ENCODE measurements at regions of chr15 and their contacts with region 1.

Region 1: GRCh38 chr15:26201177-26201858 is 338.2 kb upstream of the ATP10A start:
- DNase-seq: no peak
- H3K4me3 ChIP-seq: no peak overlapping the region
- H3K27ac ChIP-seq: no peak overlapping the region
- H3K4me1 ChIP-seq: no peaks in the 10 kb centered on the region
- H3K27me3 ChIP-seq: no peaks in the 10 kb centered on the region
- CTCF ChIP-seq: no peak
- POLR2A ChIP-seq: no peak

Region 2: GRCh38 chr15:25971053-25971452 is 230.3 kb before region 1 on chr15:
- intact Hi-C with region 1: loop called (anchors 10 kb)
- DNase-seq: no peak
- H3K4me3 ChIP-seq: no peak overlapping the region
- H3K27ac ChIP-seq: no peak overlapping the region
- H3K4me1 ChIP-seq: no peaks in the 10 kb centered on the region
- H3K27me3 ChIP-seq: no peaks in the 10 kb centered on the region
- CTCF ChIP-seq: no peak
- POLR2A ChIP-seq: no peak

Region 3: GRCh38 chr15:26087395-26087794 is 113.9 kb before region 1 on chr15:
- intact Hi-C with region 1: no loop called
- DNase-seq: no peak
- H3K4me3 ChIP-seq: no peak overlapping the region
- H3K27ac ChIP-seq: no peak overlapping the region
- H3K4me1 ChIP-seq: no peaks in the 10 kb centered on the region
- H3K27me3 ChIP-seq: no peaks in the 10 kb centered on the region
- CTCF ChIP-seq: no peak
- POLR2A ChIP-seq: no peak

Region 4: GRCh38 chr15:26146199-26146598 is 55.1 kb before region 1 on chr15:
- intact Hi-C with region 1: no loop called
- DNase-seq: no peak
- H3K4me3 ChIP-seq: no peak overlapping the region
- H3K27ac ChIP-seq: no peak overlapping the region
- H3K4me1 ChIP-seq: no peaks in the 10 kb centered on the region
- H3K27me3 ChIP-seq: no peaks in the 10 kb centered on the region
- CTCF ChIP-seq: no peak
- POLR2A ChIP-seq: no peak

Measured in thyroid gland (tissue), 4 donors.